Mucosa of descending colon (tissue), 3 donors: ENCODE measurements at regions of chr3 and their contacts with region 1.

Region 1: GRCh38 chr3:194134757-194135528 is 1.0 kb upstream of the HES1 start:
- DNase-seq: peak; percentile 92 to 96 (median 96)
- ATAC-seq: peak; percentile 71
- H3K4me3 ChIP-seq: peak overlapping the region; percentile 38
- H3K4me1 ChIP-seq: peaks cover 42% of the 10 kb centered on the region
- CTCF ChIP-seq: no peak

Region 2: GRCh38 chr3:193780810-193781472 is 354.0 kb before region 1 on chr3:
- intact Hi-C with region 1: loop called (anchors 5 kb)
- DNase-seq: peak; percentile 67 to 82 (median 81)
- ATAC-seq: peak; percentile 80
- H3K4me3 ChIP-seq: no peak overlapping the region
- H3K4me1 ChIP-seq: peaks cover 7% of the 10 kb centered on the region
- CTCF ChIP-seq: peak; percentile 63

Region 3: DNA sequence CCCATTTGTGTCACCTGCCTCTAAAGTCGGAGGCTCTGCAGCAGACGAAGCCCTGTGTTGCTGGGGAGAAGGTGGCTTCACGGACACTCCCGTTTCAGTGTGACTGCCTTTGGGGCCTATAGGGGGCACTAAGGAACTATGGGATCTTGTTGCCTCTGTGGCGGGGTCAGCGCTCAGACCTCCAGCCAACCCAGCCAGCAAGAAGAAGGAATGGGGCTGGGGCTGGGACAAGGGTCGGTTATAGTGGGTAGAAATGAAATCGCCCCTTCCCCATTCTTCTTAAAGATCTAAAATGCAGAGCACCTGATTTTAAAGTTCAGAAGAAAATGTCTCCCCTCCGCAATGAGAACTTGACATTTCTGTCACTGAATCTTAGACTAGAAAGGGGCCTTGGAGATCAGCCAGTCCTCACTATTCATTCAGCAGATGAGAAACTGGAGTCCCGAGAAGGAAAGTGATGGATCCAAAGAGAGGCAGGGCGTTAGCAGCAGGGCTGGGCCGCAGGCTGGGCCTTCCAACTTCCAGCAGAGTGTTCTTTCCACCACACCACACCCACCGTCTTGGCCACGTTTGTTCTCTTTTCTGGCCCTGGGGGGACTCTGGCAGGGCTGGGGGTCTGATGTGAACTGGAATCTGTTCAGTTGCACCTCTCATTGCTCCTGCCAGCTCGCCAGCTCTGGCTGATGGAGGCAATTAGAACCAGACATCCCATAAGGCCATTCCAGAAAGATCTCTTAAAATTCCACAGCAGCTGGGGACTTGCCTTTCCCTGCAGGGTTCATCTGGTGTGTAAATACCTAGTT is 346.6 kb before region 1 on chr3:
- intact Hi-C with region 1: loop called (anchors 5 kb)
- DNase-seq: peak; percentile 56 to 69 (median 62)
- ATAC-seq: peak; percentile 91
- H3K4me3 ChIP-seq: no peak overlapping the region
- H3K4me1 ChIP-seq: peaks cover 9% of the 10 kb centered on the region
- CTCF ChIP-seq: peak; percentile 59

Region 4: GRCh38 chr3:193910886-193911738 is 223.8 kb before region 1 on chr3:
- intact Hi-C with region 1: no loop called
- DNase-seq: no peak
- ATAC-seq: peak; percentile 64
- H3K4me3 ChIP-seq: no peak overlapping the region
- H3K4me1 ChIP-seq: no peaks in the 10 kb centered on the region
- CTCF ChIP-seq: no peak

Region 5: GRCh38 chr3:194070634-194071409 is 64.1 kb before region 1 on chr3:
- intact Hi-C with region 1: loop called in 1 of 2 experiments (anchors 10 kb)
- DNase-seq: peak; percentile 78 to 88 (median 86)
- ATAC-seq: peak; percentile 77
- H3K4me3 ChIP-seq: no peak overlapping the region
- H3K4me1 ChIP-seq: peaks cover 25% of the 10 kb centered on the region
- CTCF ChIP-seq: no peak

Region 6: GRCh38 chr3:194315088-194315964 is 180.4 kb after region 1 on chr3:
- intact Hi-C with region 1: loop called in 1 of 2 experiments (anchors 5 kb)
- DNase-seq: peak; percentile 83 to 90 (median 87)
- ATAC-seq: peak; percentile 94
- H3K4me3 ChIP-seq: no peak overlapping the region
- H3K4me1 ChIP-seq: peaks cover 6% of the 10 kb centered on the region
- CTCF ChIP-seq: peak; percentile 91

Region 7: DNA sequence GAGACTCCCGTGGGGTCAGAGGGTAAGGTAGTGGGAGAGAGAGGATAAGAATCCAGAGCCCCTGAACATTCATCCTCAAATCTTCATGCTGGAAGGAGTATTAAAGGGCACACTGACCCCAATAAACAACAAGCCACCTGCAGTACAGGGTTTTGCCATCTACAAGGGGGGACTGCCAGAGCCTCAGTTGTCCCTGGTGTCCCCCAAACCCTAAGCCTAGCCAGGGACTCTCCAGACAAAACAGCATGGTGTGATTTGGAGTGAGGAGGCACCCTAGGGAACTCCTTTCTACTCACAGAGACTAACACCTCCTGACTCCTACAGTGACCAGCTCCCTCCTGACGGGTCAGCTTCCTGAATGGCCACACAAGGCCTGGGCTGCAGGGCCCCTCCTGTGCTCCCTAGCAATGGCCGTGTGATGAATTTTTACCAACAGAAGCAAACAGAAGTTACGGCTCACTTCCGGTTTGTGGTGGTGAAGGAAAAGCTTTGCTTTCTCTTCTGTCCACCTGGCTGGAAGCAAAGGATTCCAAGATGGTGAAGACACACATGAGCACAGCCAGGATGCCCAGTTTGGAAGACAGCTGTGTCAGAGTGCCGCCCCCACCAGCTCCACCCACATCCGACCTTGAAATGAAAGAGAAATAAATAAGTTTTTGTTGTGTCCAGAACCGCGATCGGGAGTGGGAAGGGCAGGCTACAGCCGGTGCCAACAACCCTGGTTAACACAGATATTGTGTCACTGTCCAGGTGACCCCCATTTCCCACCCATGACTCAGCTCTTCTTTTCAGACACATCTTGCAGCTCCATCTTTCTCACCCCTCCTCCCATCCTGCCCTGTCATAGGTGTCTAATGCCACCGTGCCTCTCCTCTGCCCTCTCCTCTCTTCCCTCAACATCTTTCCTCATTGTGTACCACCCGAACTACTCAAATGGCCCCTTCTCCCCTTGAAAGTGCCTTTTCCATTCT is 421.4 kb after region 1 on chr3:
- intact Hi-C with region 1: no loop called
- DNase-seq: peak in 2 of 3 donors; percentile 33 to 40
- ATAC-seq: peak; percentile 74
- H3K4me3 ChIP-seq: no peak overlapping the region
- H3K4me1 ChIP-seq: peaks cover 2% of the 10 kb centered on the region
- CTCF ChIP-seq: no peak